Caco-2 (cell line): ENCODE measurements at regions of chr11 and their contacts with region 1.

Region 1: GRCh38 chr11:47355283-47356128 is 3.0 kb upstream of the MYBPC3 start:
- DNase-seq: peak; percentile 96 to 97
- H3K4me3 ChIP-seq: peak overlapping the region; percentile 23
- H3K4me3 Mint-ChIP-seq: no peak overlapping the region
- H3K27ac Mint-ChIP-seq: no peak overlapping the region
- H3K4me1 ChIP-seq: peaks cover 4% of the 10 kb centered on the region; the same call in 1 of the 2 replicates
- H3K4me1 Mint-ChIP-seq: no peaks in the 10 kb centered on the region
- H3K27me3 ChIP-seq: no peaks in the 10 kb centered on the region
- H3K27me3 Mint-ChIP-seq: no peaks in the 10 kb centered on the region
- CTCF ChIP-seq: peak; percentile 97 to 100

Region 2: DNA sequence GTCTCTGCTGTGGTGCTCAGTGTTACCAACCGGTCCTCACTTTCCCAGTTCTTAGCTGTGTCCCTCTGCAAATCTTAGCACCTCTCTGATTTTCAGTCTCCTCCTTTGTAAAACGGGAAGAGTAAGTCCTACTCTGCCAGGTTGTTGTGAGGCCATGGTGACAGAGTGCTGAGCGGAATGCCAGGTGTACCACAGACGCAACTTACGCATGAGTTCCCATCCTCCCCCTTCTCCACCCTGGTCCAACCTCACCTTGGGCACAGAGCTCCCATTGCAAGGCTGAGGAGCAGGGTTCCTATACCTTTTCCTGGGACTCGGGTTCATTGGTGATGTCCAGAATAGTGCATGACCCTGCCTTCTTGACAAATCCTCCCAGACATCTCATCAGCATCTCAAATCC is 148.0 kb before region 1 on chr11:
- CTCF ChIA-PET with region 1: no interaction called
- POLR2A ChIA-PET with region 1: no interaction called
- intact Hi-C with region 1: no loop called
- DNase-seq: no peak
- H3K4me3 ChIP-seq: no peak overlapping the region
- H3K4me3 Mint-ChIP-seq: no peak overlapping the region
- H3K27ac Mint-ChIP-seq: no peak overlapping the region
- H3K4me1 ChIP-seq: peaks cover 13% of the 10 kb centered on the region; the same call in 1 of the 2 replicates
- H3K4me1 Mint-ChIP-seq: peaks cover 9% of the 10 kb centered on the region
- H3K27me3 ChIP-seq: no peaks in the 10 kb centered on the region
- H3K27me3 Mint-ChIP-seq: no peaks in the 10 kb centered on the region
- CTCF ChIP-seq: no peak

Region 3: DNA sequence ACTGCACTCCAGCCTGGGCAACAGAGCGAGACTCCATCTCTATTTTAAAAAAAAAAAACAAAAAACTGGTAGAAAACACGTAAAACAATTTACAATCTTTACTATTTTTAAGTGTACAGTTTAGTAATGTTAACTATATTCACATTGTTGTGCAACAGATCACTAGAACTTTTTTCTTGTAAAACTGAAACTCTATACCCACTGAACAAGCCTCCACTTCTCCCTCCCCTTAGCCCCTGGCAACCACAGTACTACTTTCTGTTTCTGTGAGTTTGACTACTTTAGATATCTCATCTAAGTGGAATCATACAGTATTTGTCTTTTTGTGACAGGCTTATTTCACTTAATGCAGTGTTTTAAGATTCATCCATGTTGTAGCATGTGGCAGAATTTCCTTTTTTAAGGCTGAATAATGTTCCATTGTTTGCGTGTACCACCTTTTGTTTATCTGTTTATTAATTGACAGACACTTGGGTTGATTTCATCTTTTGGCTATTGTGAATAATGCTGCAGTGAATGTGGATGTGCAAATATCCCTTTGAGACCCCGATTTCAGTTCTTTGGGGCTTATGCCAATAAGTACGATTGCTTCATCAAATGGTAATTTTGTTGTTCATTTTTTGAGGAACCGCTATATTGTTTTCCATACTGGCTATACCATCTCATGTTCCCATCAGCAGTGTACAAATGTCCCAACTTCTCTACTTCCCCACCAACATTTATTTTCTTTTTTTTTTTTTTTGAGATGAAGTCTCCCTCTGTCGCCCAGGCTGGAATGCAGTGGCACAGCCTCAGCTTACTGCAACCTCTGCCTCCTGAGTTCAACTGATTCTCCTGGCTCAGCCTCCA is 129.7 kb before region 1 on chr11:
- CTCF ChIA-PET with region 1: no interaction called
- POLR2A ChIA-PET with region 1: no interaction called
- intact Hi-C with region 1: no loop called
- DNase-seq: no peak
- H3K4me3 ChIP-seq: no peak overlapping the region
- H3K4me3 Mint-ChIP-seq: no peak overlapping the region
- H3K27ac Mint-ChIP-seq: no peak overlapping the region
- H3K4me1 ChIP-seq: no peaks in the 10 kb centered on the region
- H3K4me1 Mint-ChIP-seq: no peaks in the 10 kb centered on the region
- H3K27me3 ChIP-seq: no peaks in the 10 kb centered on the region
- H3K27me3 Mint-ChIP-seq: no peaks in the 10 kb centered on the region
- CTCF ChIP-seq: no peak

Region 4: GRCh38 chr11:47269002-47269828 is 86.3 kb before region 1 on chr11:
- CTCF ChIA-PET with region 1: interaction called, 15 read pairs
- POLR2A ChIA-PET with region 1: interaction called, 3 read pairs
- intact Hi-C with region 1: loop called (anchors 1 kb)
- DNase-seq: peak; percentile 93 to 94
- H3K4me3 ChIP-seq: peak overlapping the region; percentile 92
- H3K4me3 Mint-ChIP-seq: peak overlapping the region; percentile 66
- H3K27ac Mint-ChIP-seq: peak overlapping the region; percentile 93
- H3K4me1 ChIP-seq: peaks cover 28% of the 10 kb centered on the region
- H3K4me1 Mint-ChIP-seq: peaks cover 28% of the 10 kb centered on the region
- H3K27me3 ChIP-seq: no peaks in the 10 kb centered on the region
- H3K27me3 Mint-ChIP-seq: no peaks in the 10 kb centered on the region
- CTCF ChIP-seq: peak in 1 of 2 experiments; percentile 16

Region 5: DNA sequence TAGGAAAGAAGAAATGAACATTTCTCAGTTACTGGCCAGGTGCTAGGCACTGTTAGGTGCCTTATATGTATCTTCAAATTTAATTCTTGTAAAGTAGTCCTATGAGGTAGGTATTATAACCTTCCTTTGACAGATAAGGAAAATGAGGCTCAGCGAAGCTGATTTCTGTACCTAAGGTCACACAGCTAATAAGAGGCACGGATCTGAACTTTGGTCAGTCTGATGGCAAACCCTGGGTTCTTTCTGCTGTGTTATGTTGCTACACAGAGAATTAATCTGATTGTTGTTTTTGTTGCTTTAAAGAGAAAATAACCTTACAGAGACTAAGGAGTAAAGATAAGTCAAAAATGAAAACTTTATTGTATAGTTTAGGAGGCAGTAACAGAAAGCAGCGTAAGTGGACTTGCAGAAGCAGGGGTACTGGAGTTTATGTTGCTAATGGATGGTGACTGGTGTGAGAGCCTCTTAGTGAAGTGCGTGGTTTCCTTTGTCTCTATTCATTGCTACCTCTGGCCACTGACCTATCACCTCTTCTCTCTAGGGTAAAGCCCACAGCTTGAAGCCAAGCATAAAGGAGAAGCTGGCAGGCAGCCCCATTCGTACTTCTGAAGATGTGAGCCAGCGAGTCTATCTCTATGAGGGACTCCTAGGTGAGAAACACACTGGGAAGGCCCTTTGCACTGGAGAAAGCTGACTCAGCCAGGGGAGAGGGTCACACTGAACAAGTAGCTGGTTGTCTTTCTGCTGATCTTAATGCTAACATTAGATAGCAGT is 47.3 kb before region 1 on chr11:
- CTCF ChIA-PET with region 1: interaction called, 6 read pairs
- POLR2A ChIA-PET with region 1: no interaction called
- intact Hi-C with region 1: loop called (anchors 2 kb)
- DNase-seq: no peak
- H3K4me3 ChIP-seq: no peak overlapping the region
- H3K4me3 Mint-ChIP-seq: no peak overlapping the region
- H3K27ac Mint-ChIP-seq: no peak overlapping the region
- H3K4me1 ChIP-seq: no peaks in the 10 kb centered on the region
- H3K4me1 Mint-ChIP-seq: no peaks in the 10 kb centered on the region
- H3K27me3 ChIP-seq: no peaks in the 10 kb centered on the region
- H3K27me3 Mint-ChIP-seq: no peaks in the 10 kb centered on the region
- CTCF ChIP-seq: no peak